ENCODE measurements at regions of chr9 and their contacts with region 1.

Region 1: DNA sequence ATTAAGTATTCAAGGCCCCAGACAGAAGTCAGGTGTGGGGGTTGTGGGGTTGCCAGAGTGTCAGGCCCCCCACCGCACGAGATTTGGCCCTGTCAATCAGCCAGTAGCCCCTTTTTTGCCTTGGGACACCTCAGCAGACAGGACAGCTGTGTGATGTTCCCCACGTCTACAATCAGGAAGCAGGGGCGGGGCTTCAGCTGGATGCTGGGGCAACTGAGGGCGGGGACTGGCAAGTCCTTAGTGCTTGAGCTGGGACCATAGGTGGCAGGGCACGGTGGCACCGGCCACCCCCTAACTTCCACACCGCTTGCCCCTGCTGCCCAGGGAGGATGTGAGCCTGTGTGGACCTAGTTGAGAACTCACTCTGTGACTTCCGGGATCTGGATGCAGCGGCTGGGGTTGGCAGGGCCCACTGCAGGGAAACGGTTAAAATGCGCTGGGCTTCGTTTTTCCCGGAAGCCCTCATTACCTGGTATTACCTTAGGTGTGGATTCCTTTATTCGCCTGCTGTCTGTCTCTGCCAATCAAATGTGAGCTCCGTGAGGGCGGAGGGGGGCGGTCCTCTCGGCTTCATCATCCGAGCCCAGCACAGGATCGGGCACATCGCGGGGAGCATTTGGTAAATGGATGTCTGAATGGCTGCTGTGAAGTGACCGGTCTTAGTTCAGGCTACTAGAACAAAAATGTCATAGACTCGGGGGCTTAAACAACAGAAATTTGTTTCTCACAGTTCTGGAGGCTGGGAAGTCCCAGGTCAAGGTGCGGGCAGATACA is 7.5 kb upstream of the GTF3C5 start:
- DNase-seq: peak; percentile 81
- H3K4me3 Mint-ChIP-seq: peak overlapping the region; percentile 35
- H3K27ac Mint-ChIP-seq: peak overlapping the region; percentile 28
- H3K4me1 Mint-ChIP-seq: peaks cover 28% of the 10 kb centered on the region
- H3K27me3 Mint-ChIP-seq: peaks cover 17% of the 10 kb centered on the region

Region 2: DNA sequence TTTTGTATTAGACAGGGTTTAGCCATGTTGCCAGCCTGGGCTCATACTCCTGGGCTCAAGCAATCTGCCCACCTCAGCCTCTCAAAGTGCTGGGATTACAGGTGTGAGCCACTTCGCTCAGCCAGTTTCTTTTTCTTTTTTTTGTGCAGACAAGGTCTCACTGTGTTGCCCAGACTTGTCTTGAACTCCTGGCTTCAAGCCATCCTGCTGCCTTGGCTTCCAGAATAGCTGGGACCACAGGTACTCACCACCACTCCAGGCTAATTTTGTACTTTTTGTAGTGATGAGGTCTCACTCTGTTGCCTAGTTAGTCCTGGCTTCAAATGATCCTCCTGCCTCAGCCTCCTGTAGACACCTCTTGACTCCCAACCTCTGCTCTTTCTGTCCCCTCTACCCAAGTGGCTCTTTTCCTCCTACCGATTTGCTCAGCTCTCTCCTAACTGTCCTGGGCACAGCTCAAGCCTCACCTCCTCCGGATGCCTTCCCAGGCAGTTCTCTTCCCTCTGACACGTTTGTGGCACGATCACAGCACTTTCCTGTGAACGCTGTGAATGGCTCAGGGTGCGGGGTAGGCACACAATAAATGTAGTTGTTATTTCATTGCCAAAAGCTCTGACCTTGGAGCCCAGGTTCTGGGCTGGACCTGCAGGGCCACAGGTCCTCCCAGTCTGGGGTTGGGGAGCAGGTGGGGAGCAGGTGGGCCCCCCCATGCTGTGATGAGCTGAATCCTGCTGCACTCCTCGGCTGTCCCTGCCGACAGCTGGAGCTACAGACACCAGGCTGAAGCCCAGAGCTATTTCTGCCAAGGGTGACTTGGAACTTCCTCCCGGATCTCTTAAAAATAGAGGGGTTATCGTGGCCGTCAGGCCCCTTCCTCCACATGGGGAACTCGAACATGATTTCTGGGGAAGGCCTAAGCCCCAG is 20.9 kb before region 1 on chr9:
- CTCF ChIA-PET with region 1: interaction called, 20 read pairs
- DNase-seq: peak; percentile 18
- H3K4me3 Mint-ChIP-seq: no peak overlapping the region
- H3K27ac Mint-ChIP-seq: no peak overlapping the region
- H3K4me1 Mint-ChIP-seq: no peaks in the 10 kb centered on the region
- H3K27me3 Mint-ChIP-seq: peaks cover 75% of the 10 kb centered on the region

Region 3: DNA sequence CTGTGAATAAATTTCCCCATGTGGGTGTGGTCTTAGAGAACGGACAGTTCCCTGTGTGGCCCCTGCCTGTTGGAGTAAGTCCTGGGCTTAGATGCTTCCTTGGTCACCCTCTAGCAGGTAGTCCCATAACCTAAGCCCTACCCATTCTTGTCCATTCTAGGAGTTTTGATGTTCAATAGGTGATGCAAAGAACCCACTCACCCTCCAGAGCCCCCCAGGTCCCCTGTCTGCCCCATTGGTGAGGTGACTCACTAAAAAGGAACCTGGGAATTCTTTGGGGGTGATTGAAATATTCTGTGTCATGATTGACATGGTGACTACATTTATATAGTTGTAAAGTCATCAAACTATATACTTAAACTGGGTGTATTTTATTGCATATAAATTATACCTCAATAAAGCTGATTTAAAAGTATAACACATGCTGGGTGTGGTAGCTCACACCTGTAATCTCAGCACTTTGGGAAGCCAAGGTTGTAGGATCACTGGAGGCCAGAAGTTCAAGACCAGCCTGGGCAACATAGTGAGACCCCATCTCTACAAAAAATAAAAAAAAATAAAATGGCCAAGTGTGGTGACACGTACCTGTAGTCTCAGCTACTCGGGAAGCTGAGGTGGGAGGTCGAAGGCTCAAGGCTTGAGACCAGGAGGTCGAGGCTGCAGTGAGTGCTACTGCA is 13.3 kb before region 1 on chr9:
- CTCF ChIA-PET with region 1: interaction called, 17 read pairs
- DNase-seq: no peak
- H3K4me3 Mint-ChIP-seq: no peak overlapping the region
- H3K27ac Mint-ChIP-seq: no peak overlapping the region
- H3K4me1 Mint-ChIP-seq: no peaks in the 10 kb centered on the region
- H3K27me3 Mint-ChIP-seq: peaks cover 55% of the 10 kb centered on the region

Region 4: GRCh38 chr9:133221177-133221809 is 198.0 kb after region 1 on chr9:
- CTCF ChIA-PET with region 1: no interaction called
- DNase-seq: no peak
- H3K4me3 Mint-ChIP-seq: no peak overlapping the region
- H3K27ac Mint-ChIP-seq: no peak overlapping the region
- H3K4me1 Mint-ChIP-seq: no peaks in the 10 kb centered on the region
- H3K27me3 Mint-ChIP-seq: peaks cover 55% of the 10 kb centered on the region